ENCODE measurements at regions of chr3 and their contacts with region 1.

Region 1: DNA sequence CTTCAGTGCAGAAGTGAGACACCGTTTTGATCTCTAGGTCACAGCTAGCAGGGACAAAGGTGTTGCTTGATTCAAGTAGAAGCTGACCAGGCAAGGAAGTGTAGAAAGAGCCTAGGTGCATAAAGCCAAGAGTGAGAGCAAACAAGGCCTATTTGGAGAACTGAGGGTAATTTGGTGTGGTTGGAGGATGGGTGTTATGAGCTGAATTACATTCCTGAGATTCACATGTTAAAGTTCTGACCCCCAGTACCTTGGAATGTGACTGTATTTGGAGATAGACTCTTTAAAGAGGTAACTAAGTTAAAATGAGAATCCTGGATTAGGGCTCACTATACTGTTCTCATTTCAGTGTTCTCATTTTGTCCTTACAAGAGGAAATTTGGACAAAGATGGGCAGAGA is 191.3 kb downstream of the ZMAT3 start:
- DNase-seq: no peak
- H3K4me3 Mint-ChIP-seq: no peak overlapping the region
- H3K27ac Mint-ChIP-seq: no peak overlapping the region
- H3K4me1 Mint-ChIP-seq: no peaks in the 10 kb centered on the region
- H3K27me3 Mint-ChIP-seq: peaks cover 1% of the 10 kb centered on the region

Region 2: DNA sequence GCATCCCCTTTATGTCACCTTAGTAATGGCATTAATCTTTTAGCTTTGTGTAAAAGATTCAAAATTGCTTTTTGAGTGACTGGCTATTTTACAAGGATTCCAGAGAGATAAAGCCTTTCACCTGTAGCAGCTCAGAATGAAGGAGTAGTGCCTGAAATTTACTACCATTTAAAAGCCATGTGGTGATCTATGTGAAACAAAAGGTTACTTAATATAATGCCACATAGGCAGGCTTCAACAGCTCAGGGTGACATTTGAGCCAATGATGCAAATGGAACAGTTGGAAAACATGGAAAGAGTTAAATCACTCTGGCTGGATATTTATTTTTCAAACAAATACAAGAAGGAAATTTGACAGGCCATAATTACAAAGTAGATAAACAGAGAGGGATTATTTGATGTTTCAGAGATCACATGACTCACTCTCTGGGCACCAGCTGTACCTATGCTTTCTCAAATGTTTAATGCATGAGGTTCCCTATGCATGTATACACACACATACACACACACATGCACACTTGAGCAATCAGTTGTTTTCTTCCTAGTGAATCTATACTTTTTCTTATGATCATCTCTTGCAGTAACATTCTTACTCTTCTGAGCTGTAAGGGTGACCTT is 19.9 kb after region 1 on chr3:
- CTCF ChIA-PET with region 1: no interaction called
- POLR2A ChIA-PET with region 1: no interaction called
- intact Hi-C with region 1: loop called (anchors 2 kb)
- DNase-seq: no peak
- H3K4me3 Mint-ChIP-seq: no peak overlapping the region
- H3K27ac Mint-ChIP-seq: no peak overlapping the region
- H3K4me1 Mint-ChIP-seq: no peaks in the 10 kb centered on the region
- H3K27me3 Mint-ChIP-seq: no peaks in the 10 kb centered on the region